ENCODE measurements at regions of chr13 and their contacts with region 1.

Region 1: GRCh38 chr13:60463787-60464186 is 66.8 kb downstream of the TDRD3 start:
- DNase-seq: peak in 1 of 3 donors; percentile 12
- H3K4me3 ChIP-seq: no peak overlapping the region
- H3K27ac ChIP-seq: no peak overlapping the region
- H3K4me1 ChIP-seq: no peaks in the 10 kb centered on the region
- H3K27me3 ChIP-seq: no peaks in the 10 kb centered on the region

Region 2: GRCh38 chr13:60448907-60449510 is 14.8 kb before region 1 on chr13:
- CTCF ChIA-PET with region 1: interaction called, 10 read pairs
- POLR2A ChIA-PET with region 1: no interaction called
- DNase-seq: peak; percentile 34 to 63 (median 50)
- H3K4me3 ChIP-seq: no peak overlapping the region
- H3K27ac ChIP-seq: no peak overlapping the region
- H3K4me1 ChIP-seq: no peaks in the 10 kb centered on the region
- H3K27me3 ChIP-seq: no peaks in the 10 kb centered on the region

Region 3: GRCh38 chr13:60654415-60654814 is 190.6 kb after region 1 on chr13:
- CTCF ChIA-PET with region 1: no interaction called
- POLR2A ChIA-PET with region 1: no interaction called
- DNase-seq: peak; percentile 15 to 42 (median 23)
- H3K4me3 ChIP-seq: no peak overlapping the region
- H3K27ac ChIP-seq: no peak overlapping the region
- H3K4me1 ChIP-seq: no peaks in the 10 kb centered on the region
- H3K27me3 ChIP-seq: no peaks in the 10 kb centered on the region